ENCODE measurements at regions of chr1 and their contacts with region 1.

Region 1: GRCh38 chr1:61921435-61921834 is 179.2 kb downstream of the PATJ start:
- DNase-seq: peak; percentile 48
- H3K4me3 ChIP-seq: no peak overlapping the region
- H3K27ac ChIP-seq: no peak overlapping the region
- H3K4me1 ChIP-seq: no peaks in the 10 kb centered on the region
- H3K27me3 ChIP-seq: no peaks in the 10 kb centered on the region
- CTCF ChIP-seq: peak; percentile 54

Region 2: GRCh38 chr1:61536174-61537108 is 385.0 kb before region 1 on chr1:
- CTCF ChIA-PET with region 1: no interaction called
- POLR2A ChIA-PET with region 1: no interaction called
- intact Hi-C with region 1: no loop called
- DNase-seq: no peak
- H3K4me3 ChIP-seq: no peak overlapping the region
- H3K27ac ChIP-seq: no peak overlapping the region
- H3K4me1 ChIP-seq: no peaks in the 10 kb centered on the region
- H3K27me3 ChIP-seq: no peaks in the 10 kb centered on the region
- CTCF ChIP-seq: no peak

Region 3: GRCh38 chr1:62038594-62039284 is 117.3 kb after region 1 on chr1:
- CTCF ChIA-PET with region 1: no interaction called
- POLR2A ChIA-PET with region 1: no interaction called
- intact Hi-C with region 1: loop called (anchors 10 kb)
- DNase-seq: peak; percentile 15
- H3K4me3 ChIP-seq: no peak overlapping the region
- H3K27ac ChIP-seq: no peak overlapping the region
- H3K4me1 ChIP-seq: peaks cover 9% of the 10 kb centered on the region
- H3K27me3 ChIP-seq: no peaks in the 10 kb centered on the region
- CTCF ChIP-seq: peak; percentile 48

Region 4: DNA sequence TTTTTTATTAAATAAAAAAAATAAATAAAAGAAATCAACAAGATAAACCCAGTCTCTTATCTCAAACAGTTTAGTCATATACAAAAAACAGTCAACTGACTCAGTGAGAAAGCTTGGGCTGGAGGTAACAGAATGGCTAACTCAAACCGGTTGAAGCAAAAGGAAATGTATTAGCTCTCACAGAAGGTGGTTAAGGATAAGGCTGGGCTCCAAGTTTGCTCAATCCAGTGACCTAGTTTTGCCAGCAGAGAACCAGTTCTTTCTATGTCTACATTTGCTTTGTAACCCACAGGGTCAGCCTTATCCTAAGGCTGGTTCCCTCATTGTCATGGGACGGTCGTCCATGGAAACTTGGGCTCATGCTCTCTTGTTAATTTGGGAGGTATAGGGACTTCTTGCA is 128.7 kb after region 1 on chr1:
- CTCF ChIA-PET with region 1: no interaction called
- POLR2A ChIA-PET with region 1: interaction called, 16 read pairs
- intact Hi-C with region 1: no loop called
- DNase-seq: no peak
- H3K4me3 ChIP-seq: no peak overlapping the region
- H3K27ac ChIP-seq: no peak overlapping the region
- H3K4me1 ChIP-seq: peaks cover 6% of the 10 kb centered on the region
- H3K27me3 ChIP-seq: no peaks in the 10 kb centered on the region
- CTCF ChIP-seq: no peak

Region 5: DNA sequence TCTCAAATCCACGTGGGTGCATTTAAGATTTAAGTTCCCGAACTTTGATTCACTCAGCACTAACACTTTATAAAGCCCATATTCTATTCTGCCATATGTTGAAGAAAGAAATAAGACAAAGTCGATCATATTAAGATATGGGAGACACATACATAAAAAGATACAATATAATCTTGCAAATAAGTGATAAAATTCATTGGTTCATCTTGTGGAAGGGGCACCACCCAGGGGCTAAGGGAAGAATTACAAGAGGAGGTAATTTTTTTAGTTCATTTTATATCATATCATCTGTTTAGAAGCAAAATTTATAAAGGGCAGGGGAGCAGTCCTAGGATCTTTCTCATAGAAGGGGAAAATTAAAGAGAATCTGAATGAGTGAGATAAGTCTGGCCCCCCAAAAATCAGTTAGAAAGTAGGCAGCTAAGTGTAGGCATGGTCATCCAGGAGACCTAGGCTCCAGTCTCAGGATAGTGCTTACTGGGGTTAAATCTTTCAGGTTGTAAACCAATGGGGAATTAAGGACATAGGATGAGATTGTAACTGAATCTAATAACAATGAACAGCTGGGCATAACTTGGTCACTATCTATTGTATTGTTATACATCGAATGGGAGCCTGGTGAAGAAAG is 149.1 kb after region 1 on chr1:
- CTCF ChIA-PET with region 1: no interaction called
- POLR2A ChIA-PET with region 1: no interaction called
- intact Hi-C with region 1: loop called (anchors 1 kb)
- DNase-seq: peak; percentile 33
- H3K4me3 ChIP-seq: no peak overlapping the region
- H3K27ac ChIP-seq: no peak overlapping the region
- H3K4me1 ChIP-seq: no peaks in the 10 kb centered on the region
- H3K27me3 ChIP-seq: no peaks in the 10 kb centered on the region
- CTCF ChIP-seq: peak; percentile 87

Region 6: GRCh38 chr1:62131093-62131725 is 209.8 kb after region 1 on chr1:
- CTCF ChIA-PET with region 1: no interaction called
- POLR2A ChIA-PET with region 1: no interaction called
- intact Hi-C with region 1: loop called (anchors 5 kb)
- DNase-seq: peak; percentile 80
- H3K4me3 ChIP-seq: no peak overlapping the region
- H3K27ac ChIP-seq: no peak overlapping the region
- H3K4me1 ChIP-seq: no peaks in the 10 kb centered on the region
- H3K27me3 ChIP-seq: no peaks in the 10 kb centered on the region
- CTCF ChIP-seq: peak; percentile 97

Measured in A673 (cell line).